ENCODE measurements at regions of chr17 and their contacts with region 1.

Region 1: GRCh38 chr17:59361916-59362810 is 30.7 kb downstream of the YPEL2 start:
- DNase-seq: peak; percentile 86
- ATAC-seq: peak; percentile 79
- H3K4me3 ChIP-seq: peak overlapping the region; percentile 40; the same call in 1 of the 2 replicates
- H3K27ac ChIP-seq: peak overlapping the region; percentile 54
- H3K4me1 ChIP-seq: peaks cover 50% of the 10 kb centered on the region
- H3K27me3 ChIP-seq: no peaks in the 10 kb centered on the region
- CTCF ChIP-seq: no peak
- EP300 ChIP-seq: 0 out of 4 replicates have a peak, but pooled peaks of 1 of the 2 experiments have one; percentile 48
- POLR2A ChIP-seq: no peak
- RAD21 ChIP-seq: no peak

Region 2: GRCh38 chr17:59372138-59372857 is 10.1 kb after region 1 on chr17:
- CTCF ChIA-PET with region 1: interaction called, 6 read pairs
- POLR2A ChIA-PET with region 1: interaction called, 12 read pairs
- RAD21 ChIA-PET with region 1: interaction called, 4 read pairs
- SMC1A ChIA-PET with region 1: interaction called, 25 read pairs
- in situ Hi-C with region 1: no loop called
- intact Hi-C with region 1: no loop called
- DNase-seq: peak; percentile 79
- ATAC-seq: peak; percentile 88
- H3K4me3 ChIP-seq: peak overlapping the region; percentile 18; the same call in 1 of the 2 replicates
- H3K27ac ChIP-seq: peak overlapping the region; percentile 64
- H3K4me1 ChIP-seq: peaks cover 60% of the 10 kb centered on the region
- H3K27me3 ChIP-seq: no peaks in the 10 kb centered on the region
- CTCF ChIP-seq: no peak
- EP300 ChIP-seq: peak; percentile 68 to 69
- POLR2A ChIP-seq: no peak
- RAD21 ChIP-seq: no peak

Measured in GM12878 (cell line).